ENCODE measurements at regions of chr22 and their contacts with region 1.

Region 1: DNA sequence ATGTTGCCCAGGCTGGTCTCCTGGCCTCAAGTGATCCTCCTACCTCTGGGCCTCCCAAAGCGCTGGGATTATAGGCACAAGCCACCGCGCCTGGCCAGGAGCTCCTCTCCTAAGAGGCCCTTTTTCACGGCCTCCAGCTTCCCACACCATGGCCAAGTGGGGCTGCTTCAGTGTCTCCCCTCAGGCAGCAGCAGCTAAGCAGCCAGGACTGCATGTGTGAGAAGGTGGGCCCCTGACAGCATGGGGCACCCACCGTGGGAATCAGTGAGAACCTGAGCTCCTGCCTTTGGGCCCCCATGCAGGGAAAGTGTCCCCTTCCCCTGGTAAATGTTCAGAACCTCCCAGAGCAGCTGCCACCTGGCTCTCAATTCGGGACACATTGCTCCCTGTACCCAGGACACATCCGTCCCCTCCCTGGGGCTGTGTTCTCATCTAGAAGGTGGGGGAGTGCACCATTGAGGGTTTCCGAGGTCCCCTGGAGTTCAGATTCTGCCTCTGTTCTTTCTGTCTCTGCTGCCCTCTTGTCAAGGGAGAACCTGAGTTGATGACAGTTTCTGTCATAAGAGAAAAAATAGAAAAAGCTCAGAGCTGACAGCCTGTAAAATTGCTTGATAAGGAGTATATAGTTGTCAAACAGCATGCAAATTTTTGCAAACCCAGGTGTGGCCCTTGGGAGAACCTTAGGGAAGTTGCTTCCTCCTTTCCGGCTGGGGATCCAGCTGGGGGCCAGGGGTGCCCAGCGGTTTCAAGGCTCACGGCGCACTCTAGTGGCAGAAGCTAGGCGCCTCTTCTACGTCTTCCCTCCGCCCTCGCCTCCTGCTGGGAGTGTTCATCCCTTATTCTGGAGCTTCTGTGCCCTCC is 29.7 kb downstream of the FAM83F start:
- DNase-seq: peak; percentile 77
- ATAC-seq: peak; percentile 79
- H3K4me3 ChIP-seq: no peak overlapping the region
- H3K4me3 Mint-ChIP-seq: no peak overlapping the region
- H3K27ac ChIP-seq: no peak overlapping the region
- H3K27ac Mint-ChIP-seq: no peak overlapping the region
- H3K4me1 ChIP-seq: peaks cover 7 to 8% of the 10 kb centered on the region in 2 donors
- H3K4me1 Mint-ChIP-seq: peaks cover 5% of the 10 kb centered on the region
- H3K27me3 ChIP-seq: peaks cover 0 to 3% (median 0%) of the 10 kb centered on the region in 4 experiments
- H3K27me3 Mint-ChIP-seq: peaks cover 7% of the 10 kb centered on the region
- CTCF ChIP-seq: peak; percentile 79

Region 2: DNA sequence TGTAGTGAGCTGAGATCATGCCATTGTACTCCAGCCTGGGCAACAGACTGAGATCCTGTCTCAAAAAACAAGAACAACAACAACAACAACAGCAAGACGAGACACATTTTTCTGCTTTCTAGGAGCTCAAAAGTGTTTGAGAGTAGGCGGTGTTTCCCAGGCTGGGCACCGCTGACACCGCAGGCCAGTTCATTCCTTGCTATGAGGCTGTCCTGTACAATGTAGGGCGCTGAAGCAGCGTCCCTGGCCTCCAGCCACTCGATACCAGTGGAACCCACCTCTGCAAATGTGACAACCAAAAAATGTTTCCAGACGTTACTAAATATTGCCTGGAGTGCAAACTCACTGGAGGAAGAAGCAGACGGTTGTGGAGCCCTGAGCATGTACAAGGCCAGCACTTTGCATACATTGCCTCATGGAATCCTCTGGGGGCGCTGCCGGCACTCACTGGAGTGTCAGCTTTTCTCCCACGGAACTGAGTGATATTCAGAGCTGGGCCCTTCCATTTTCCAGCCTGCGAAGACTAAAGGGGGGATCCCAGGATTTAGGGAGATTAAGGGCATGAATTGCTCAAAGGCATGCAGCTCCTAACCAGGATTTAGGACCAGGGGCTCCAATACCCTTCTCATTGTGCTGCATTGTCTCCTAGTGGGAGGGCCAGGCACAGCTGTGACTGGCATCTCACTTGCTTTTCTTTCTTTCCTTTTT is 528.1 kb before region 1 on chr22:
- CTCF ChIA-PET with region 1: interaction called, 44 read pairs
- POLR2A ChIA-PET with region 1: no interaction called
- intact Hi-C with region 1: no loop called
- DNase-seq: peak; percentile 62
- ATAC-seq: peak; percentile 75
- H3K4me3 ChIP-seq: no peak overlapping the region
- H3K4me3 Mint-ChIP-seq: no peak overlapping the region
- H3K27ac ChIP-seq: no peak overlapping the region
- H3K27ac Mint-ChIP-seq: peak overlapping the region; percentile 70
- H3K4me1 ChIP-seq: peaks cover 4 to 7% of the 10 kb centered on the region in 2 donors
- H3K4me1 Mint-ChIP-seq: peaks cover 16% of the 10 kb centered on the region
- H3K27me3 ChIP-seq: no peaks in the 10 kb centered on the region
- H3K27me3 Mint-ChIP-seq: no peaks in the 10 kb centered on the region
- CTCF ChIP-seq: peak; percentile 73

Region 3: DNA sequence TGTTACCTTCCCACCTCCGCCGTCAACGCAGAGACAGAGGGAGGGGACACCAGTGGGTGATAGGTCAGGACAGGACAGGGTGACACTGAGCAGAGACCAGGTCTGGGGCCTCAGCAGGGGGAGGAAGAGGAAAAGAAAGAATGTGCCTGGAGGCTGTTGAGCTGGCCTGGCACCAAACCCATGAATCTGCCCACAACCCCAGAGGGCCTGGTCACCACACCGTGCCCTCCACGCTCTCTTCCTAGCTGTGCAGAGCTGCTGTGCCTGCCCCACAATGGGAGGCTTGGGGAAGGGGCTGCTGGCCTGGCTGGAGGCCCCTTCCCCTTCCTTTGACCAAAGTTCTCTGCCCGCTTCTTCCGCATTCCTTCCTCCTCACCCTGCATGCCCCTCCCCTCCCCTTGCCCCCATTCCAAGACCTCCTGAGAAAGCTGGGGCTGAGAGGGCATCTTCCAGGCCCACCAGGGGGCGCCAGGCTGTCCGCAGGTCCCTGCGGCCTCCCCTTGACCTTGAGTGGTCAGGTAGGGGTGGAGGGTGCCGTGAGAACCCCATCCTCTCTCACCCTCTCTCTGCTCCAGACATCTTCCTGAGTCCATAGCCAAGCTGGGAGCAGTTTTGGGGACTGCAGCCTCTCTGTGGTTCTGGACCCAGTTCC is 464.9 kb before region 1 on chr22:
- CTCF ChIA-PET with region 1: interaction called, 68 read pairs
- POLR2A ChIA-PET with region 1: interaction called, 3 read pairs
- intact Hi-C with region 1: no loop called
- DNase-seq: no peak
- ATAC-seq: no peak
- H3K4me3 ChIP-seq: no peak overlapping the region
- H3K4me3 Mint-ChIP-seq: no peak overlapping the region
- H3K27ac ChIP-seq: no peak overlapping the region
- H3K27ac Mint-ChIP-seq: no peak overlapping the region
- H3K4me1 ChIP-seq: peaks cover 8 to 16% of the 10 kb centered on the region in 2 donors
- H3K4me1 Mint-ChIP-seq: peaks cover 10% of the 10 kb centered on the region
- H3K27me3 ChIP-seq: peaks cover 0 to 51% (median 25%) of the 10 kb centered on the region in 4 experiments
- H3K27me3 Mint-ChIP-seq: peaks cover 39% of the 10 kb centered on the region
- CTCF ChIP-seq: peak; percentile 39

Region 4: DNA sequence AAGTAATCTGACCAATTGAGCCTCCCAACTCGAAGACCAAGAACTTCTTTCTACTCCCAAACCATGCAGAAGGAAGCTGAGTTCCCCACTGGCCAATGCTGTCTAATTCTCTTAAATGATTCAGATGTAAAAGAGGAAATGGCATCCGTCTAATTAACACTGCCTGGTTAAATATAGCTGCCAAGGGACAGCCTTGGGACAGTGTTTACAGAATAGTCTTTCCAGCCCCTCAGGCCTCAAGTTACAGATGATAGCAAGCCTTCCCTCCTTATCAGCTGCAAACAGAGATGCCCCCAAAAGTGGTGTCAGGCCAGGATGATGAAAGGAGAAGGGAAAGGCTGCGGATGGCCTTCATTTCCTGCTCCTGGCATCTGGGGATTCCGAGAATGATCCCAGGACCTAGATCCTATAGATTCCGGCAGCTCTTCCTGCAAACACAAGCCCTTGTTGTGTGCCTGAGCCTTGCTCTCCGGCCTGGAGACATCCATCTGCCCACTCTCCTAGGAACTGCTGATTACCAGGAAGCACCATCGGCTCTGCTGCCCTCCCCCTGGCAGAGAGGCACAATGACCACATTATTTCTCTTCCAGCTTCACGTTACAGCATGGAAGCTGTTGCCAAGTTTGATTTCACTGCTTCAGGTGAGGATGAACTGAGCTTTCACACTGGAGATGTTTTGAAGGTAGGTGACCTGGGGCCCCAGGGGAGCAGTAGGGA is 77.8 kb before region 1 on chr22:
- CTCF ChIA-PET with region 1: interaction called, 17 read pairs
- POLR2A ChIA-PET with region 1: no interaction called
- intact Hi-C with region 1: loop called (anchors 5 kb)
- DNase-seq: peak; percentile 60
- ATAC-seq: no peak
- H3K4me3 ChIP-seq: peak overlapping the region in 2 of 5 experiments; percentile 1 to 17
- H3K4me3 Mint-ChIP-seq: peak overlapping the region; percentile 76
- H3K27ac ChIP-seq: peak overlapping the region; percentile 23 to 40
- H3K27ac Mint-ChIP-seq: peak overlapping the region; percentile 57
- H3K4me1 ChIP-seq: peaks cover 73 to 76% of the 10 kb centered on the region in 2 donors
- H3K4me1 Mint-ChIP-seq: peaks cover 70% of the 10 kb centered on the region
- H3K27me3 ChIP-seq: no peaks in the 10 kb centered on the region
- H3K27me3 Mint-ChIP-seq: no peaks in the 10 kb centered on the region
- CTCF ChIP-seq: no peak

Region 5: GRCh38 chr22:40007813-40008710 is 16.4 kb before region 1 on chr22:
- CTCF ChIA-PET with region 1: interaction called, 10 read pairs
- POLR2A ChIA-PET with region 1: no interaction called
- intact Hi-C with region 1: no loop called
- DNase-seq: no peak
- ATAC-seq: no peak
- H3K4me3 ChIP-seq: no peak overlapping the region
- H3K4me3 Mint-ChIP-seq: no peak overlapping the region
- H3K27ac ChIP-seq: no peak overlapping the region
- H3K27ac Mint-ChIP-seq: no peak overlapping the region
- H3K4me1 ChIP-seq: no peaks in the 10 kb centered on the region
- H3K4me1 Mint-ChIP-seq: no peaks in the 10 kb centered on the region
- H3K27me3 ChIP-seq: peaks cover 0 to 38% (median 8%) of the 10 kb centered on the region in 4 experiments
- H3K27me3 Mint-ChIP-seq: peaks cover 50% of the 10 kb centered on the region
- CTCF ChIP-seq: no peak

Region 6: GRCh38 chr22:40203572-40203971 is 179.1 kb after region 1 on chr22:
- CTCF ChIA-PET with region 1: no interaction called
- POLR2A ChIA-PET with region 1: no interaction called
- intact Hi-C with region 1: no loop called
- DNase-seq: peak; percentile 61
- ATAC-seq: peak; percentile 84
- H3K4me3 ChIP-seq: no peak overlapping the region
- H3K4me3 Mint-ChIP-seq: peak overlapping the region; percentile 58
- H3K27ac ChIP-seq: peak overlapping the region in 1 of 2 donors; percentile 80
- H3K27ac Mint-ChIP-seq: peak overlapping the region; percentile 81
- H3K4me1 ChIP-seq: peaks cover 35 to 40% of the 10 kb centered on the region in 2 donors
- H3K4me1 Mint-ChIP-seq: peaks cover 62% of the 10 kb centered on the region
- H3K27me3 ChIP-seq: no peaks in the 10 kb centered on the region
- H3K27me3 Mint-ChIP-seq: no peaks in the 10 kb centered on the region
- CTCF ChIP-seq: no peak